H1 (cell line): ENCODE measurements at regions of chr15 and their contacts with region 1.

Region 1: DNA sequence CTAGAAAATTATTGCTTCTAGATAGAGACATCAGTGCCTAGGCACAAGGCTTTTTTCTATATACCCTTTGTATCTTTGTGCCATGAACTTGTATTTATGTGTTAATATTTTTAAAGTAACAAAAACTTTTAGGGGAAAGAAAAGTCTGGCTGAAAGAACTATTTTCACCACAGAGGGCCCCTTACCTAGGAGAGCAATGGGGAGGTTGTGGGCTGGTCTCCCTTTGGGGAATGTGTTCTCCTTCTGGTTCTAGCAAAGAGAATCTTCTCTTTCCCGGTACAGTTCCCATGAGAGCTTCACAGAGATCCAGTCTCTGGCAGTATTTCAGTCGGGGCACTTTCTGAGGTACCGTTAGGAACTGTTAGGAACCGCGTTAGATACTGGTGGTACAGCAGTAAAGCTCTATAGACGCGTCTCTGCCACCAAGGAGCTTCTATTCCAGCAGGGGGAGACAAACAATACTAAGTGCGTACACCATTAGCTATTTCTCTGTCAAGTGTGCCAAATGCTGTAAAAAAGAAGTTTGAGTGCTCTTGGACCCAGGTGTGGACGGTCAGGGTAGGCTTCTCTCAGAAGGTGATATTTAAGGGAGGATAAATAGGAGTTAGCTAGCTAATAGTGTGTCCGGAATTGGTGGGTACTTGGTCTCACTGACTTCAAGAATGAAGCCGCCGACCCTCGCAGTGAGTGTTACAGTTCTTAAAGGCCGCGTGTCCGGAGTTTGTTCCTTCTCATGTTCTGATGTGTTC is 4.6 kb upstream of the EPB42 start:
- DNase-seq: no peak
- H3K4me3 ChIP-seq: no peak overlapping the region
- H3K27ac ChIP-seq: no peak overlapping the region
- H3K4me1 ChIP-seq: no peaks in the 10 kb centered on the region
- H3K27me3 ChIP-seq: no peaks in the 10 kb centered on the region
- CTCF ChIP-seq: peak in 2 of 3 experiments; percentile 79 to 88; a peak in 3 of 4 replicates
- EP300 ChIP-seq: no peak
- POLR2A ChIP-seq: no peak
- RAD21 ChIP-seq: peak; percentile 76 to 79

Region 2: DNA sequence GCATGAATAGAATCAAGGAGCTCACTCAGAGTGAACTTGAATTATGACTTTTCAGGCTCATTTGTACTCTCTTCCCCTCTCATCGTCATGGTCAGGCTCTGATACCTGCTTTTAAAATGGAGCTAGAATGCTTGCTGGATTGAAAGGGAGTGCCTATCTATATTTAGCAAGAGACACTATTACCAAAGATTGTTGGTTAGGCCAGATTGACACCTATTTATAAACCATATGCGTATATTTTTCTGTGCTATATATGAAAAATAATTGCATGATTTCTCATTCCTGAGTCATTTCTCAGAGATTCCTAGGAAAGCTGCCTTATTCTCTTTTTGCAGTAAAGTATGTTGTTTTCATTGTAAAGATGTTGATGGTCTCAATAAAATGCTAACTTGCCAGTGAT is 30.6 kb before region 1 on chr15:
- CTCF ChIA-PET with region 1: interaction called, 14 read pairs
- POLR2A ChIA-PET with region 1: no interaction called
- DNase-seq: no peak
- H3K4me3 ChIP-seq: no peak overlapping the region
- H3K27ac ChIP-seq: no peak overlapping the region
- H3K4me1 ChIP-seq: no peaks in the 10 kb centered on the region
- H3K27me3 ChIP-seq: no peaks in the 10 kb centered on the region
- CTCF ChIP-seq: no peak
- EP300 ChIP-seq: no peak
- POLR2A ChIP-seq: no peak
- RAD21 ChIP-seq: no peak

Region 3: DNA sequence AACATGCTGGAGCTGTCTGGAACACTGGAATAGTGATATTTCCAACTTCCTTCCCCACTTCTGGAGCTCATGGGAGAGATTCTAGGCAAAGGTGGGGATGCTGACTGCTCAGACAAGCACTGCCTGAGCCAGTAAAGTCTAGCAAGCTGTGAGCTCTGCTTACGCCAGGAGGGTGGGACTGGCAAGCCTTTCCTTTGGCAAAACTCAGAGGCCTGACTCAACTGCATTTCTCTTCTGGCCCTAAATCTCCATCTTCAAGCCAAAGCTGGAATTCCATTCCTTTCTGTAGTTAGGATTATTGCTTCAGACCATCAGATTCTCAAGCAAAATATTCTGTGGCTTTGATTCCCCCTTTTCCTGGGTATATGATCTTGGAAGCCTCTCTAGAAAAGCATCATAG is 15.7 kb after region 1 on chr15:
- CTCF ChIA-PET with region 1: interaction called, 39 read pairs
- POLR2A ChIA-PET with region 1: interaction called, 3 read pairs
- DNase-seq: no peak
- H3K4me3 ChIP-seq: no peak overlapping the region
- H3K27ac ChIP-seq: no peak overlapping the region
- H3K4me1 ChIP-seq: no peaks in the 10 kb centered on the region
- H3K27me3 ChIP-seq: no peaks in the 10 kb centered on the region
- CTCF ChIP-seq: no peak
- EP300 ChIP-seq: no peak
- POLR2A ChIP-seq: no peak
- RAD21 ChIP-seq: no peak

Region 4: DNA sequence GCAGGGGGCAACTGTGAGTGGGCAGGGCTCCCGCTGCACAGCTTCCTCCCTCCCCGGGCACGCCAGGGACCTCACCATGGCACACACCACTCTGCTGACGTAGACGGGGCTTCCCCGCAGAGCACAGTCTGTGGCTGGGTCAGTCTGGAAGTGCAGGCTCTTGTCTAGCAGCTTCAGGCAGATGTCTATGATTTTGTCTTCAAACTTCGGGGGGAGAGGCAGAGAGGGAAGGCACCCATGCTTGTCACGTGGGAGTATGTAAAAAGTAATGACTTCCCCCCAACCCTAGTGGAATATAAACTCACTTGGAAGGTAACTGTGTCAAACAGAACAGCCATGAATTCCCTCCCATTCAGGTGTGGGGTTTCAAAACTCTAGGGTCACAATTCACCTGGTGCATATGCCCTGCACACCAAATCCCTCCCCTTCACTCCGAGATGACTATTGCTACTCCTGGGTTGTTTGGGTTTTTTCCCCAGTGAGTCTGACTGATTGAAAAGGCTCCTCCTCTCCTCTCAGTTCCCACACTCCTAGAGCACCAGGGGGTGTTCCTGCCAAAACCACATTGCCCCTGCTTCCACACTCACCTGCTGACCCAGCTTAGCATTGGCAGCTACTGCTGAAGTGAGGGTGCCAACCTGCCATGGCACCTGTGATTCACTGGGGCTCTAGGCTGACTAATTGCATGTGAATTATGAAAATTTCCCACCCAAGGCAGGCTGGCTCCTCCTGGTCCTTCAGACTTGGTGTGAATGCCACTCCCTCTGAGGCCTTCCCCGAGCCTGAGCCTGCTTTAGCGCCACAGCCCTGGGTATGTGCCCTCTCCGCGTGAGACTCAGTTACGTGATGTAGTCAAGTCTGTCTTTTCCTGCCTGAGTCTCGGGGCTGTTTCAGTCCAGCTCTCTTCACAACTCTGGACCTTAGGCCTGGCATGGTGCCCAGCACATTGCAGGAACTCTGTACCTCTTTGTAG is 28.3 kb after region 1 on chr15:
- CTCF ChIA-PET with region 1: interaction called, 14 read pairs
- POLR2A ChIA-PET with region 1: no interaction called
- DNase-seq: no peak
- H3K4me3 ChIP-seq: no peak overlapping the region
- H3K27ac ChIP-seq: no peak overlapping the region
- H3K4me1 ChIP-seq: no peaks in the 10 kb centered on the region
- H3K27me3 ChIP-seq: no peaks in the 10 kb centered on the region; a peak in 1 of 7 replicates
- CTCF ChIP-seq: no peak
- EP300 ChIP-seq: no peak
- POLR2A ChIP-seq: no peak
- RAD21 ChIP-seq: no peak

Region 5: GRCh38 chr15:43274136-43274535 is 48.8 kb after region 1 on chr15:
- CTCF ChIA-PET with region 1: interaction called, 82 read pairs
- POLR2A ChIA-PET with region 1: no interaction called
- DNase-seq: no peak
- H3K4me3 ChIP-seq: no peak overlapping the region
- H3K27ac ChIP-seq: no peak overlapping the region
- H3K4me1 ChIP-seq: no peaks in the 10 kb centered on the region
- H3K27me3 ChIP-seq: no peaks in the 10 kb centered on the region
- CTCF ChIP-seq: no peak
- EP300 ChIP-seq: no peak
- POLR2A ChIP-seq: no peak
- RAD21 ChIP-seq: no peak

Region 6: DNA sequence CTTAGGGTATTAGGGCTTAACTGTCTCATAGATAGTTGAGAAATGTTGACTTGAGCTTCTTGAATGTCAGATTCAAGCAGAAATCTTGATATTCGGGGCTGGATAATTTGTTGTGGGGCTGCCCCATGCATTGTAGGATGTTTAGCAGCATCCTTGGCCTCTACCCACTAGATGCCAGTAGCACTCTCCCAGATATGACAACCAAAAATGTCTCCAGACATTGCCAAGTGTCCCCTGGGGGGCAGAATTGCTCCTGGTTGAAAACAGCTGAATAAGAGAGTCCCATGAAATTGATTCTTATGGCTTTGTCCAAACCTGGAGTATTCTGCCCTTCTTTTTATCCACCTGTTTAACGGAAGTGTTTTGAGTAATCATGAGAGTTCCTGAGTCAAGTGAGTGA is 120.9 kb after region 1 on chr15:
- CTCF ChIA-PET with region 1: no interaction called
- POLR2A ChIA-PET with region 1: no interaction called
- DNase-seq: no peak
- H3K4me3 ChIP-seq: no peak overlapping the region
- H3K27ac ChIP-seq: no peak overlapping the region
- H3K4me1 ChIP-seq: no peaks in the 10 kb centered on the region
- H3K27me3 ChIP-seq: no peaks in the 10 kb centered on the region
- CTCF ChIP-seq: no peak
- EP300 ChIP-seq: no peak
- POLR2A ChIP-seq: no peak
- RAD21 ChIP-seq: no peak

Region 7: DNA sequence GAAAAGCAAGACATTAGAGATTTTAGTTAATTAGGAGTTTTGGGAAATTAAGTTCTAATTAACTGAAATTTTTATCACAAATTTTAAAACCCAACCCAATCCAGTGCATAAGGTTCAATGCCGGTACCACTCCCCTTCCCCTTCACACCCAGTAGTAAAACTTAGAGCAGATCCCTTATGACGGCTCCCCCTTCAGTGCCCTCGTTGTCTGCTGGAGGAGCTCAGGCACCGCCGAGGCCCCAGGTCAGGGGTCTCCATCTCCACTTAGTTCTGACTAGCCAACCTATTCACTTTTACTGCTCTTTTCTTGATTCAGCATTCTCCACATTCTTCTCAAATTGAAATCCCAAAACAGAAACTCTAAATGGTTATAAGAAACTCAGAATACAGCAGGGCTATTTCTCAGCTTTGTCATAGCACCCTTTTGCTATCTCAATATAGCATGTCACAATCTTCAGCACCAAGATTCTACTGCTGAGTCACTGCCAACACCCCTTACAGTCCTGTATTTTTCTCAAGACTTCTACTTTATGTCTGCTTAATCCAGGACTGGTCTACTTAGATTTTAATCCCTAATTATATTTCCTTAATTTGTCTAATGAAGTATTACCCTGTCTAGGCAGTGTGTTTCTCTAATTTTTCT is 185.3 kb after region 1 on chr15:
- CTCF ChIA-PET with region 1: no interaction called
- POLR2A ChIA-PET with region 1: no interaction called
- DNase-seq: no peak
- H3K4me3 ChIP-seq: no peak overlapping the region
- H3K27ac ChIP-seq: no peak overlapping the region
- H3K4me1 ChIP-seq: no peaks in the 10 kb centered on the region
- H3K27me3 ChIP-seq: no peaks in the 10 kb centered on the region
- CTCF ChIP-seq: no peak
- EP300 ChIP-seq: no peak
- POLR2A ChIP-seq: no peak
- RAD21 ChIP-seq: no peak